ENCODE measurements at regions of chr3 and their contacts with region 1.

Region 1: GRCh38 chr3:150170852-150171520 is 200.3 kb upstream of the PFN2 start:
- DNase-seq: no peak
- CTCF ChIP-seq: no peak

Region 2: GRCh38 chr3:149969940-149970715 is 200.9 kb before region 1 on chr3:
- in situ Hi-C with region 1: loop called (anchors 10 kb)
- DNase-seq: peak; percentile 74
- CTCF ChIP-seq: no peak

Measured in GM13977 (cell line).